ENCODE measurements at regions of chr19 and their contacts with region 1.

Region 1: GRCh38 chr19:531009-531752 is 379 bp upstream of the CDC34 start:
- DNase-seq: peak; percentile 78 to 89
- ATAC-seq: peak; percentile 46 to 89 (median 74)
- H3K4me3 ChIP-seq: peak overlapping the region; percentile 76 to 100 (median 93)
- H3K27ac ChIP-seq: peak overlapping the region; percentile 95 to 100 (median 98)
- H3K4me1 ChIP-seq: peaks cover 16 to 39% (median 35%) of the 10 kb centered on the region in 9 donors
- H3K27me3 ChIP-seq: peaks cover 0 to 8% (median 0%) of the 10 kb centered on the region in 7 donors
- CTCF ChIP-seq: peak in 2 of 9 donors; percentile 9 to 25

Region 2: DNA sequence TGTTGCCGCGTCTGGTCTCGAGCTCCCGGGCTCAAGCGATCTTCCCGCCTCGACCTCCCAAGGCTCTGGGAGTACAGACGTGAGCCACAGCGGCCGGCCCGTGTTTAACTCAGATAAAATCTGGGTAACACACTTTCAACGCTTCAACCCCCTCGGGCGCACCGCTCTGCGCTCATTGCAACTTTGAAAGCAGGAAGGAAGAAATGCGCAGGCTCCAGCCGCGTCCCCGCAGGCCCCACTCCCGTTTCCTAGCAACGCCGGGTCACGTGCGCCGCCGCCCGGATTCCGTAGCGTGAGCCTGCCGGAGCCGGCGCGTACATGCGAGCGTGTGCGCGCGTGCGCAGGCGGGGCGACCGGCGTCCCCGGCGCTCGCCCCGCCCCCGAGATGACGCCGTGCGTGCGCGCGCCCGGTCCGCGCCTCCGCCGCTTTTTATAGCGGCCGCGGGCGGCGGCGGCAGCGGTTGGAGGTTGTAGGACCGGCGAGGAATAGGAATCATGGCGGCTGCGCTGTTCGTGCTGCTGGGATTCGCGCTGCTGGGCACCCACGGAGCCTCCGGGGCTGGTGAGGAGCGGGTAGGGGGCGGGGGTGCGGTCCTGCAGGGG is 41.1 kb after region 1 on chr19 and contains the start of gene BSG:
- intact Hi-C with region 1: loop called in 3 of 10 experiments (anchors 2 to 5 kb)
- DNase-seq: peak; percentile 98
- ATAC-seq: peak; percentile 69 to 87 (median 83)
- H3K4me3 ChIP-seq: peak within 1 kb of the TSS; percentile 74 to 100 (median 96)
- H3K27ac ChIP-seq: peak within 1 kb of the TSS; percentile 85 to 98 (median 96)
- H3K4me1 ChIP-seq: peaks cover 19 to 59% (median 51%) of the 10 kb centered on the region in 9 donors
- H3K27me3 ChIP-seq: no peaks in the 10 kb centered on the region
- CTCF ChIP-seq: no peak
- total RNA-seq, gene BSG: 1,225 to 2,457 (median 1,705) TPM

Region 3: DNA sequence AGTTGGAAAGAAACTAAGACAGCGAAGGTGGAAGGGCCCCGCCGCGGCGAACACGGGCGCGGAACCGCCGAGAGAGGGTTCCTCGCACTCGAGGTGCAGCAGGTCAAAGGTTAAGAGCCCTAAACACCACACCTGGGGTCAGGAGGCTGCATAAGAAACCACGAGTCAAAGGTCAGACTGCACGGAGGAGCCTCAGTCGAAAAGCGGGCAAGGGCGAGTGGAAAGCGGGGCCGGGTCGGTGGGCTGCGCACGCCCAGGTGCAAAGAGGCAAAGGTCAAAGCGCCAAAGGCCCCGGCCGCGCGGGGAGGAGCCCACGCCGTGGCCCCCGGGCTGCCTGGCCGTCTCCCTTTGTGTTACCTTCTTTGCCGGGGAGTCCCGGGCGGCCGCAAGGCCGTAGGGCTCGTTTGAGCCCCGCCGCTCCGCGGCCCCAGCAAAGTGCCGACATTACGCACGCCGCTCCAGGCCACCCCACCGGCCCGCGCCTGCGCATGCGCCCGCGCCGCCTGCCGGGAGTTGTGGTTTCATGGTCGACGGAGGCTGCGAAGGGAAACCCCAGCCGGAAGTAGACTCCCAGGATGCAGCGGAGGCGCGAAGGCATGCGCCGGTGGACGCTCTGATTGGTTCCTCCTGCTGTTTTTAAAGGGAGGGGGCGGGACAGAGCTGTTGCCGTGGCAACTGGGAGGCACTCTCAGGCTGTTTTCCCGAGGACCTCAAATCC is 102.0 kb after region 1 on chr19 and contains the start of gene POLRMT:
- intact Hi-C with region 1: loop called in 2 of 10 experiments (anchors 5 to 10 kb)
- DNase-seq: peak; percentile 98
- ATAC-seq: peak; percentile 92 to 98 (median 98)
- H3K4me3 ChIP-seq: peak within 1 kb of the TSS; percentile 82 to 99 (median 92)
- H3K27ac ChIP-seq: peak within 1 kb of the TSS in 9 of 10 donors; percentile 75 to 89 (median 83)
- H3K4me1 ChIP-seq: peaks cover 15 to 34% (median 21%) of the 10 kb centered on the region in 9 donors
- H3K27me3 ChIP-seq: peaks cover 0 to 1% (median 0%) of the 10 kb centered on the region in 7 donors
- CTCF ChIP-seq: peak in 6 of 9 donors; percentile 8 to 51 (median 26)
- total RNA-seq, gene POLRMT: 37.2 to 61.7 (median 45.3) TPM

Measured in heart right ventricle (tissue), 16 donors.